ENCODE measurements at regions of chr10 and their contacts with region 1.

Region 1: DNA sequence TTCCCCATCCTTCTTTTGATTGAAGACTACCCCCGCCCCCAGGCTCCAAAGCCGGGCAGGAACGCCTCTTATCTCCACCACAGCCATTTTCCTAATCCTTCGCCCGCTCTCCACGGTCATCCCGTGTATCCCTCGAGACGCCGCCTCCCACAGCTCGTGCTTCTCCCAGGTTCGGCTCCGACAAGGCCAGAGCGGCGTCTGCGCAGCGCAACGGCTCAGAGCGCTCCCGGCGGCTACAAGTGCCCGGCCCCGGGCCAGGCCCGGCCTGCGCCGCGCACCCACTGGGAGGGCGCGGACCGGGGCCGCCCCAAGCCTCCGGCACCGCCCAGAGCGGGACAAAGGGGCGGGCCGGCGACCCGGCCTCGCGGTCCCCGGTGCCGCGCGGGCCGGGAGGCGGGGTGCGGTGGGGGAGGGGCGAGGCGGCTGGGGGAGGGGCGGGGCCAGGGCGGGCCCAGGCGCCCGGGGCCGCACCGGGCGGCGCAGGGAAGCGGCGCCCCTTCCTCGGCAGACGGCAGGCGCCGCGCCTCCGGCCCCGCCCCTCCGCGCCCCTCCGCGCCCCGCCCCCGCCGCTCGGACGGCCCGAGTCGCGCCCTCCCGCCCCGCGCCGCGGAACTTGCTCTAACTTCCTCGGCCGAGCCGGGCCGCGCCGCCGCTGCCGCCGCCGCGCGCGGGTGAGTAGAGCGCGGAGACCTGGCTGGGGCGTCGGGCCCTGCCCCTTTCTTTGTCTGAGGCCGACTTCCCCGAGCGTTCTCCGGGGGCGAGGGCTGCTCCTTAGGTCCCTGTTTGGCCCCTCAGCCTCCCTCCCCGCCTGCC is at the start of gene TSPAN14:
- DNase-seq: peak; percentile 67 to 79
- ATAC-seq: peak; percentile 79 to 82
- H3K4me3 ChIP-seq: peak within 1 kb of the TSS; percentile 73 to 95 (median 86)
- H3K27ac ChIP-seq: peak within 1 kb of the TSS; percentile 94 to 96 (median 95)
- H3K4me1 ChIP-seq: peaks cover 23 to 30% of the 10 kb centered on the region in 2 donors
- H3K27me3 ChIP-seq: no peaks in the 10 kb centered on the region
- CTCF ChIP-seq: peak in 1 of 5 experiments; percentile 10
- POLR2A ChIP-seq: peak; percentile 55 to 68
- total RNA-seq, gene TSPAN14: 22.6 to 29.3 (median 26.9) TPM

Region 2: GRCh38 chr10:79579361-79579760 is 874.5 kb before region 1 on chr10:
- in situ Hi-C with region 1: no loop called
- intact Hi-C with region 1: no loop called
- DNase-seq: no peak
- ATAC-seq: no peak
- H3K4me3 ChIP-seq: no peak overlapping the region
- H3K27ac ChIP-seq: no peak overlapping the region
- H3K4me1 ChIP-seq: no peaks in the 10 kb centered on the region
- H3K27me3 ChIP-seq: no peaks in the 10 kb centered on the region
- CTCF ChIP-seq: no peak
- POLR2A ChIP-seq: no peak

Region 3: GRCh38 chr10:80408242-80409101 is 45.4 kb before region 1 on chr10 and contains the start of gene PRXL2A:
- in situ Hi-C with region 1: no loop called
- intact Hi-C with region 1: loop called (anchors 5 kb)
- DNase-seq: peak; percentile 51 to 59
- ATAC-seq: peak; percentile 77 to 78
- H3K4me3 ChIP-seq: peak within 1 kb of the TSS; percentile 79 to 91 (median 87)
- H3K27ac ChIP-seq: peak within 1 kb of the TSS; percentile 84 to 91 (median 88)
- H3K4me1 ChIP-seq: peaks cover 23 to 33% of the 10 kb centered on the region in 2 donors
- H3K27me3 ChIP-seq: no peaks in the 10 kb centered on the region
- CTCF ChIP-seq: peak in 2 of 5 experiments; percentile 7 to 24
- POLR2A ChIP-seq: peak in 1 of 2 donors; percentile 64
- total RNA-seq, gene PRXL2A: 19.0 to 29.2 (median 22.5) TPM

Measured in gastrocnemius medialis (tissue), 4 donors.